Heart right ventricle (tissue), 16 donors: ENCODE measurements at regions of chr6 and their contacts with region 1.

Region 1: DNA sequence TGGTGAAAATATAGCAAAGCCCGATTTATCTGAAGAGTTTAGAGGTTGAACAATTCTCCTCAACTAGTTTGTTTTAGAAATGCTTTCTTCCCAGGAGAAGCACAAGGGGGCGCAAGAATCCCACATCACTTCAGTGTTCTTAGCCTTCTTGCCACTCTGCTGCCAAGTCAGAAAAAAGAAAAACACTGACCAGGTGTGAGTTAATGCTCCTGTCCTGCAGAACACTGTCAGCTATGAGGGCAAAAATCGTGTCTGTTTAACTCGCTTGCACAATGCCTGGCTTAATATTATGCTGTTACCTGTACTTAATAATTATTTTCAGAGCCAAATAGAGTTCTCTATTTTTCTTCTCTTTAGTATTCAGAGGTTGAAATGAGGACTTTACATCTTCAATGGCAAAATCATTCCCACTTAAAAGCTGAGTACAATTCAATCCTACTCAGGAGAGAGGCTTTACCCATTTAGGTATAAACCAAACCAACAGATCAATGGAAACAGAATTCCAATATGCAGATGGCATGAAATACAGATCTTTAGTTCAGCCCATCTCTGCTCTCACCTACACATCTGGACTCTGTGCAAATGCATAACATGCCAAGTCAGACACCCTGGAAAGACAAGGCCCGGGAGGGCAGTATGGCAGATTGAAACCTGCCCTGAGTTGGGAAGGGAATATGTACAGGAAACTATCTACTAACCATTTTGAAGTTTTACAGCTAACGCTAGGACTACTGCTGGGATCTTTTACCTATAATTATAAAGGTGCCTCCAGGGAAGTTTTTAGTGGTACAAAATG is 71.4 kb upstream of the TULP1 start:
- DNase-seq: peak in 1 of 2 donors; percentile 81
- ATAC-seq: peak; percentile 59 to 85 (median 76)
- H3K4me3 ChIP-seq: no peak overlapping the region
- H3K27ac ChIP-seq: peak overlapping the region in 5 of 10 donors; percentile 4 to 51 (median 21)
- H3K4me1 ChIP-seq: peaks cover 0 to 55% (median 16%) of the 10 kb centered on the region in 9 donors
- H3K27me3 ChIP-seq: no peaks in the 10 kb centered on the region
- CTCF ChIP-seq: peak; percentile 66 to 94 (median 87)

Region 2: DNA sequence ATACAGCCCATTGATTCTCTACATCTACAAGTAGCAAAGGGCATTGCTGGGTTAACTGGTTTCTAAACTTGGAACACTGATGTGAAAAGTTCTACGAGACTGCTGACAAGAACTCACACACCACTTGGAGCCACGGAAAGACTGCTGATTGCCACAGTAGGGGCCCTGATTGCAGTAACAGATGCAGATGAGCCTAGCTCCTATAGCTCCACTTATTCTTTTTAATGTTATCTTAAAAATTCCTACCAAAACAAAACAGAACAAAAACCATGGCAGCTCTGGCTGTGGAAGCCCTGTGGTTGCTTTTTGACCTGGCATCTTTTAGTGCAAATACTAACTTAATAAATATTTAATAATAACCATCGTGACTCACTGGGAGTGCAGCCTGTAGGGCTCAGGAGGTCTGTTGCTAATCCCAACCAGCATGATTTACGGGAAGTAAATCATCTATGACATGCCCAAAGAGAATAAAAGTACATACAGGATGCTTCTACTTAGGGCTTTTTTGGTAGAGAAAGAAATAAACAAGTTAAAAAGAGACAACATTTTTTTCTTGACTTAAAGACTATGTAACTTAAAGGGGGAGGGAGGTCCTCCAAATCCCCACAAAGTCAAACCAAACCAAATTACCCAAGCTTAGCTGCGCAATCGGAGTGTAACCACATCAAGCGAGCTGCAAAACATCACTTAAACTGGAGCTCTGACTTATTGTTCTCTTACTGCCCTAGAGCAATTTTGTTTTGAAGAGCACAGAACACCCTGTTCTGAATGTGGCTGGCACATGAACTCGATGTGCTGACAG is 17.4 kb after region 1 on chr6:
- intact Hi-C with region 1: loop called in 1 of 10 experiments (anchors 2 kb)
- DNase-seq: peak in 1 of 2 donors; percentile 25
- ATAC-seq: peak; percentile 72 to 92 (median 88)
- H3K4me3 ChIP-seq: peak overlapping the region in 7 of 10 donors; percentile 2 to 41 (median 29)
- H3K27ac ChIP-seq: peak overlapping the region; percentile 84 to 96 (median 91)
- H3K4me1 ChIP-seq: peaks cover 14 to 94% (median 46%) of the 10 kb centered on the region in 9 donors
- H3K27me3 ChIP-seq: no peaks in the 10 kb centered on the region
- CTCF ChIP-seq: no peak

Region 3: GRCh38 chr6:35634316-35634715 is 50.2 kb after region 1 on chr6:
- intact Hi-C with region 1: loop called in 3 of 10 experiments (anchors 5 kb)
- DNase-seq: peak; percentile 16 to 29
- ATAC-seq: peak in 5 of 8 donors; percentile 42 to 73 (median 44)
- H3K4me3 ChIP-seq: no peak overlapping the region
- H3K27ac ChIP-seq: peak overlapping the region in 5 of 10 donors; percentile 20 to 48 (median 21)
- H3K4me1 ChIP-seq: peaks cover 0 to 38% (median 10%) of the 10 kb centered on the region in 9 donors
- H3K27me3 ChIP-seq: no peaks in the 10 kb centered on the region
- CTCF ChIP-seq: no peak

Region 4: DNA sequence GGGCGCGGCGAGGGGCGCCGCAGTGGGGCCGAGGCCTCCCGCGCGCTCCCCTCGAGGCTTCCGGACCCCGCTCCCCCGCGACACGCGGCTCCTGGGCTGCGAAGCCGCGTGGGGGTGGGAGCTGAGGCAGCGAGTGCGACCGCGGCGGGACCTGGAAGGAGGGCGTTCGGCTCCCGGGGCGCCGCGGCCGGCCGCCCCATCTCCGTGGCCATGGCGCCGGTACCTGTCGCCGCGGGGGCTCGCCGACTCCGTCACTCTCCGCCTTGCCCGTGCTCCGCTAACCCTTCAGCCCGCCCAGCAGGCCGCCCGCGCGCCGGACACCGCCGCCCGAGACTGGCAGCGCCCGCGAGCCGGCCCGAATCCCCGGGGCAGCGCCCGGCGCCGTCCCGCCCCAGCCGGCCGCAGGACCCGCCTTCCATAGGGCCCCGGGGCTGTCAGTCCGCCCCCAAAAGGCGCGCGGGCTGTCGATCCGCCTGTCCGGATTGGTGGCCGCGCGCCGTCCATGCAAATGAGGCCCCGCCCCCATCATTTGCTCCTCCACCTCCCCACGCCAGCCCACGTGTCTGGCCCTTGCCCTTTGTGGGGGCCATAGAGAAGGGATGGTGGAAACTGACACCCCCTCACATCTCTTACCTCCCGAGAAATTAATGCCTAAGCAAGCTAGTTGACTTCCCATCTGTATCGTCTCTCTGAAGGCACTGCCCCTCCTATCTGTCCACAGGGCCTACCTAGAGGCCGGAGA is 104.7 kb after region 1 on chr6 and contains the start of gene FKBP5:
- intact Hi-C with region 1: loop called in 5 of 10 experiments (anchors 2 to 10 kb)
- DNase-seq: peak; percentile 96
- ATAC-seq: peak; percentile 93 to 99 (median 97)
- H3K4me3 ChIP-seq: peak within 1 kb of the TSS; percentile 72 to 97 (median 93)
- H3K27ac ChIP-seq: peak within 1 kb of the TSS; percentile 87 to 99 (median 93)
- H3K4me1 ChIP-seq: peaks cover 0 to 65% (median 34%) of the 10 kb centered on the region in 9 donors
- H3K27me3 ChIP-seq: no peaks in the 10 kb centered on the region
- CTCF ChIP-seq: peak in 1 of 9 donors; percentile 8
- total RNA-seq, gene FKBP5: 20.3 to 151 (median 45.3) TPM

Region 5: DNA sequence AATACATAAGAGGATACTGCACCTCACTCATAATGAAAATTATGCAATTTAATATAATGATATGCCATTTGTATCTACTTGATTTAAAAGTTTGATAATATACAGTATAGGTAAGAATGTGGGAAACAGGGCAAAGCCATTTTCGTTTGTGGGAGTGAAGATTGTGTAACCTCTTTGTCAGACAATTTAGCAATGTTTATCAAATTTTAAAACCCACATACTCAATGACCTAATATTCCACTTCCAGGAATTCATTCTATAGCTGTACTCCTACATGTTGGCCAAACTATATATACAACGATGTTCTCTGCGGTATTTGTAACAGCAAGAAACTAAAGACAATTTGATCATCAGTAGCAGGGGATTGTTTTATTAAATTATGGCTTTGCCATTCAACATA is 122.4 kb after region 1 on chr6:
- intact Hi-C with region 1: no loop called
- DNase-seq: no peak
- ATAC-seq: no peak
- H3K4me3 ChIP-seq: no peak overlapping the region
- H3K27ac ChIP-seq: no peak overlapping the region
- H3K4me1 ChIP-seq: peaks cover 0 to 13% (median 0%) of the 10 kb centered on the region in 9 donors
- H3K27me3 ChIP-seq: no peaks in the 10 kb centered on the region
- CTCF ChIP-seq: no peak

Region 6: GRCh38 chr6:35737413-35738211 is 153.5 kb after region 1 on chr6:
- intact Hi-C with region 1: loop called (anchors 1 to 2 kb)
- DNase-seq: no peak
- ATAC-seq: peak; percentile 70 to 91 (median 80)
- H3K4me3 ChIP-seq: no peak overlapping the region
- H3K27ac ChIP-seq: no peak overlapping the region
- H3K4me1 ChIP-seq: peaks cover 5 to 43% (median 20%) of the 10 kb centered on the region in 9 donors
- H3K27me3 ChIP-seq: no peaks in the 10 kb centered on the region
- CTCF ChIP-seq: peak; percentile 83 to 92 (median 87)